Natural killer cell (primary cell): ENCODE measurements at regions of chr6 and their contacts with region 1.

Region 1: GRCh38 chr6:129498950-129499842 is 210.8 kb downstream of the ARHGAP18 start:
- DNase-seq: peak in 1 of 2 donors; percentile 80
- ATAC-seq: peak; percentile 53 to 88 (median 83)
- H3K4me3 ChIP-seq: no peak overlapping the region
- H3K4me3 Mint-ChIP-seq: peak overlapping the region; percentile 42
- H3K27ac ChIP-seq: no peak overlapping the region
- H3K27ac Mint-ChIP-seq: peak overlapping the region; percentile 15 to 57
- H3K4me1 ChIP-seq: peaks cover 6% of the 10 kb centered on the region
- H3K4me1 Mint-ChIP-seq: peaks cover 11 to 13% of the 10 kb centered on the region in 2 donors
- H3K27me3 ChIP-seq: no peaks in the 10 kb centered on the region
- H3K27me3 Mint-ChIP-seq: peaks cover 3 to 6% of the 10 kb centered on the region in 2 donors
- CTCF ChIP-seq: peak; percentile 83

Region 2: GRCh38 chr6:129567374-129567773 is 68.2 kb after region 1 on chr6:
- intact Hi-C with region 1: loop called (anchors 2 kb)
- DNase-seq: peak in 1 of 2 donors; percentile 25
- ATAC-seq: peak in 1 of 3 donors; percentile 34
- H3K4me3 ChIP-seq: no peak overlapping the region
- H3K4me3 Mint-ChIP-seq: no peak overlapping the region
- H3K27ac ChIP-seq: no peak overlapping the region
- H3K27ac Mint-ChIP-seq: no peak overlapping the region
- H3K4me1 ChIP-seq: no peaks in the 10 kb centered on the region
- H3K4me1 Mint-ChIP-seq: no peaks in the 10 kb centered on the region
- H3K27me3 ChIP-seq: no peaks in the 10 kb centered on the region
- H3K27me3 Mint-ChIP-seq: no peaks in the 10 kb centered on the region
- CTCF ChIP-seq: peak; percentile 20

Region 3: DNA sequence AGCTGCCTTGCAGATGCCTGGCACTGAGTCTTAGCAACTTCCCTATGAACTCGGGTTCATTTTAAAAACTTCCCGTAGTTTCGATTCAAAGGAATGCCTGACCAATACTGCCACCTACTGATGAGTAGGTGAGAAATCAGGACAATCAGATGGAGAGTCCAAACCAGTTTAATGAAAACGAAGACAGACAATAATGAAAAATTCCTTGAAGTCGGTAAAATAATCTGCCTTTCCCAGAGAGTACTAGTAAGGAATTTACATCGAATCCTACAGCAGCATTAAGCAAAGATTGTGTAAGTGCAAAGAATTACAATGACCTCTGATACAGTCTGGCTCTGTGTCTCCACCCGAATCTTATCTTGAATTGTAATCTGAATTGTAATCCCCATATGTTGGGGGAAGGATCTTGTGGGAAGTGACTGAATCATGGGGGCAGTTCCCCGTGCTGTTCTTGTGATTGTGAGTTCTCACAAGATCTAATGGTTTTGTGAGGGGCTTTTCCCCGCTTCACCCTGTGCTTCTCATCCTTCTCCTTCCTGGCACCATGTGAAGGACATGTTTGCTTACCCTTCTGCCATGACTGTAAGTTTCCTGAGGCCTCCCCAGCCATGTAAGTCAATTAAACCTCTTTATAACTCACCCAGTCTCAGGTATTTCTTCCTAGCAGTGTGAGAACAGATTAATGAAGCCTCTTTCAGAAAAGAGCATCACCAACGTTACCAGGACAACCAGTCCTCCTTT is 76.4 kb after region 1 on chr6:
- intact Hi-C with region 1: loop called (anchors 2 kb)
- DNase-seq: peak in 1 of 2 donors; percentile 59
- ATAC-seq: peak in 1 of 3 donors; percentile 66
- H3K4me3 ChIP-seq: no peak overlapping the region
- H3K4me3 Mint-ChIP-seq: peak overlapping the region; percentile 63
- H3K27ac ChIP-seq: no peak overlapping the region
- H3K27ac Mint-ChIP-seq: no peak overlapping the region
- H3K4me1 ChIP-seq: no peaks in the 10 kb centered on the region
- H3K4me1 Mint-ChIP-seq: peaks cover 9 to 14% of the 10 kb centered on the region in 2 donors
- H3K27me3 ChIP-seq: no peaks in the 10 kb centered on the region
- H3K27me3 Mint-ChIP-seq: no peaks in the 10 kb centered on the region
- CTCF ChIP-seq: peak; percentile 71

Region 4: GRCh38 chr6:129598244-129599187 is 99.3 kb after region 1 on chr6:
- intact Hi-C with region 1: no loop called
- DNase-seq: peak in 1 of 2 donors; percentile 84
- ATAC-seq: peak; percentile 87 to 98 (median 94)
- H3K4me3 ChIP-seq: no peak overlapping the region
- H3K4me3 Mint-ChIP-seq: no peak overlapping the region
- H3K27ac ChIP-seq: no peak overlapping the region
- H3K27ac Mint-ChIP-seq: no peak overlapping the region
- H3K4me1 ChIP-seq: no peaks in the 10 kb centered on the region
- H3K4me1 Mint-ChIP-seq: no peaks in the 10 kb centered on the region
- H3K27me3 ChIP-seq: no peaks in the 10 kb centered on the region
- H3K27me3 Mint-ChIP-seq: no peaks in the 10 kb centered on the region
- CTCF ChIP-seq: peak; percentile 87

Region 5: GRCh38 chr6:129683601-129684322 is 184.6 kb after region 1 on chr6:
- intact Hi-C with region 1: loop called (anchors 10 kb)
- DNase-seq: peak; percentile 44 to 83
- ATAC-seq: peak; percentile 83 to 94 (median 84)
- H3K4me3 ChIP-seq: no peak overlapping the region
- H3K4me3 Mint-ChIP-seq: peak overlapping the region; percentile 77
- H3K27ac ChIP-seq: peak overlapping the region; percentile 69
- H3K27ac Mint-ChIP-seq: peak overlapping the region; percentile 82 to 84
- H3K4me1 ChIP-seq: peaks cover 46% of the 10 kb centered on the region
- H3K4me1 Mint-ChIP-seq: peaks cover 55 to 66% of the 10 kb centered on the region in 2 donors
- H3K27me3 ChIP-seq: no peaks in the 10 kb centered on the region
- H3K27me3 Mint-ChIP-seq: no peaks in the 10 kb centered on the region
- CTCF ChIP-seq: no peak

Region 6: GRCh38 chr6:129730477-129731165 is 231.4 kb after region 1 on chr6:
- intact Hi-C with region 1: loop called (anchors 2 kb)
- DNase-seq: peak in 1 of 2 donors; percentile 74
- ATAC-seq: peak in 2 of 3 donors; percentile 50 to 57
- H3K4me3 ChIP-seq: no peak overlapping the region
- H3K4me3 Mint-ChIP-seq: no peak overlapping the region
- H3K27ac ChIP-seq: no peak overlapping the region
- H3K27ac Mint-ChIP-seq: peak overlapping the region in 1 of 2 donors; percentile 33
- H3K4me1 ChIP-seq: no peaks in the 10 kb centered on the region
- H3K4me1 Mint-ChIP-seq: peaks cover 5 to 8% of the 10 kb centered on the region in 2 donors
- H3K27me3 ChIP-seq: no peaks in the 10 kb centered on the region
- H3K27me3 Mint-ChIP-seq: no peaks in the 10 kb centered on the region
- CTCF ChIP-seq: peak; percentile 69

Region 7: DNA sequence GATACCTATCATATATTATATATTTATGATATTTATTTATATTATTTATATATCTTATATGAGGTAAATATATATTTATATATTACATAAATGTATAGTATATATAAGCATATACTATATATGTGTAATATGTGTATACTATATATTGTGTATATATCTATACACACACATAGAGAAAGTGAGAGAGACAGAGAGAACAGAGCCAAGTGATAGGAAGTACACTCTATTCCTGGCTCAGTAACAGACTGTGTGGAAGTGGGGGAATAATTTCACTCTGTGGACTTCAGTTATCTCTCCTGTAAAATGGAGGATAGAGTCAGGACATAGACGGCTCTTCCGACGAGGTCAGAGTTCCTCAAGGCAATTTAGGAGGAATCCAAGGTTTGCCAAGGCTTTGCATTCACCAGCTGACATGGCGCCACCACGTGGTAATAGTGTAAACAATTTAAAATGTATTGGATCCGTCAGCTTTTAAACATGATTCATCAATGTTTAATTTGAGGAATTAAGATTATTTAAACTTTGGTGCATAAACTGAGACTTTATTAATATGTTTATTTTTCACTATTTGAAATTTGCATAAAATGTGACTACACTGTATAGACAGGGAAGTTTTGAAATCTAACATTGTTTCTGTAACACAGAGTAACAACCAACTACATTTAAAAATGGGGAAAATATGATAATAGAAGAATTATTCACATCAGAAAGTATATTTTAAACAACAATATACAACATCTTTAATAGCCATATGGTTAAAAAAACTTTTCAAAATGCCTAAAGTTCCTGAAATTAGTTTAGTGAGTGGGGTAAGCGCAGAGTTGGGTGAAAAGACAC is 437.4 kb after region 1 on chr6:
- intact Hi-C with region 1: loop called (anchors 2 kb)
- DNase-seq: peak in 1 of 2 donors; percentile 74
- ATAC-seq: peak in 2 of 3 donors; percentile 49 to 66
- H3K4me3 ChIP-seq: no peak overlapping the region
- H3K4me3 Mint-ChIP-seq: no peak overlapping the region
- H3K27ac ChIP-seq: no peak overlapping the region
- H3K27ac Mint-ChIP-seq: no peak overlapping the region
- H3K4me1 ChIP-seq: no peaks in the 10 kb centered on the region
- H3K4me1 Mint-ChIP-seq: no peaks in the 10 kb centered on the region
- H3K27me3 ChIP-seq: peaks cover 2% of the 10 kb centered on the region
- H3K27me3 Mint-ChIP-seq: peaks cover 23 to 45% of the 10 kb centered on the region in 2 donors
- CTCF ChIP-seq: peak; percentile 69